B cell (primary cell): ENCODE measurements at regions of chr13 and their contacts with region 1.

Region 1: GRCh38 chr13:40401911-40402776 is 264.3 kb downstream of the FOXO1 start:
- DNase-seq: peak; percentile 56
- ATAC-seq: peak; percentile 99
- H3K4me3 ChIP-seq: peak overlapping the region in 3 of 5 experiments; percentile 16 to 33 (median 32)
- H3K4me3 Mint-ChIP-seq: peak overlapping the region; percentile 75
- H3K27ac ChIP-seq: no peak overlapping the region
- H3K27ac Mint-ChIP-seq: peak overlapping the region; percentile 75
- H3K4me1 ChIP-seq: peaks cover 15 to 18% of the 10 kb centered on the region in 2 donors
- H3K4me1 Mint-ChIP-seq: peaks cover 29% of the 10 kb centered on the region
- H3K27me3 ChIP-seq: no peaks in the 10 kb centered on the region
- H3K27me3 Mint-ChIP-seq: no peaks in the 10 kb centered on the region
- CTCF ChIP-seq: no peak

Region 2: GRCh38 chr13:40388617-40389016 is 13.5 kb before region 1 on chr13:
- CTCF ChIA-PET with region 1: interaction called, 4 read pairs
- POLR2A ChIA-PET with region 1: interaction called, 7 read pairs
- intact Hi-C with region 1: loop called (anchors 1 kb)
- DNase-seq: peak; percentile 80
- ATAC-seq: peak; percentile 94
- H3K4me3 ChIP-seq: peak overlapping the region in 4 of 5 experiments; percentile 9 to 66 (median 48)
- H3K4me3 Mint-ChIP-seq: peak overlapping the region; percentile 90
- H3K27ac ChIP-seq: peak overlapping the region; percentile 75 to 95
- H3K27ac Mint-ChIP-seq: peak overlapping the region; percentile 98
- H3K4me1 ChIP-seq: peaks cover 25 to 31% of the 10 kb centered on the region in 2 donors
- H3K4me1 Mint-ChIP-seq: peaks cover 26% of the 10 kb centered on the region
- H3K27me3 ChIP-seq: no peaks in the 10 kb centered on the region
- H3K27me3 Mint-ChIP-seq: no peaks in the 10 kb centered on the region
- CTCF ChIP-seq: no peak

Region 3: DNA sequence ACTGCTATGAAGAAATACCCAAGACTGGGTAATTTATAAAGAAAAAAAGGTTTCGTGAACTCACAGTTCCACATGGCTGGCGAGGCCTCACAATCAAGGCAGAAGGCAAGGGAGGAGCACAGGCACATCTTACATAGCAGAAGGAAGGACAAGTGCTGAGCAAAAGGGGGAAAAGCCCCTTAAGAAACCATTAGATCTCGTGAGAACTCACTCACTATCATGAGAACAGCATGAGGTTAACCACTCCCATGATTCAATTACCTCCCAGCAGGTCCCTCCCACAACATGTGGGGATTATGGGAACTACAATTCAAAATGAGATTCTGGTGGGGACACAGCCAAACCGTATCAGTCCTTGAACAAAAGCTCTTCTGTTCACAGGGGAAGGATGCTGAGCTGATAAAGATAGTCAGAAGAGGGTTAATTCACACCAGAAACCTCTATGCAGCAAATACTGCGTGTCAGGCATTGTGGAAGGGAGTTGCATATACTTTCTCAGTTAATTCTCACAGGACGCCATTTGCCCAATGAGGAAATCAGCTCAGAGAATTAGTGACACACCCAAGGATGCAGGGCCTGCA is 18.1 kb after region 1 on chr13:
- CTCF ChIA-PET with region 1: no interaction called
- POLR2A ChIA-PET with region 1: no interaction called
- intact Hi-C with region 1: loop called (anchors 2 kb)
- DNase-seq: no peak
- ATAC-seq: no peak
- H3K4me3 ChIP-seq: no peak overlapping the region
- H3K4me3 Mint-ChIP-seq: no peak overlapping the region
- H3K27ac ChIP-seq: no peak overlapping the region
- H3K27ac Mint-ChIP-seq: no peak overlapping the region
- H3K4me1 ChIP-seq: peaks cover 9 to 21% of the 10 kb centered on the region in 2 donors
- H3K4me1 Mint-ChIP-seq: peaks cover 35% of the 10 kb centered on the region
- H3K27me3 ChIP-seq: no peaks in the 10 kb centered on the region
- H3K27me3 Mint-ChIP-seq: no peaks in the 10 kb centered on the region
- CTCF ChIP-seq: no peak

Region 4: DNA sequence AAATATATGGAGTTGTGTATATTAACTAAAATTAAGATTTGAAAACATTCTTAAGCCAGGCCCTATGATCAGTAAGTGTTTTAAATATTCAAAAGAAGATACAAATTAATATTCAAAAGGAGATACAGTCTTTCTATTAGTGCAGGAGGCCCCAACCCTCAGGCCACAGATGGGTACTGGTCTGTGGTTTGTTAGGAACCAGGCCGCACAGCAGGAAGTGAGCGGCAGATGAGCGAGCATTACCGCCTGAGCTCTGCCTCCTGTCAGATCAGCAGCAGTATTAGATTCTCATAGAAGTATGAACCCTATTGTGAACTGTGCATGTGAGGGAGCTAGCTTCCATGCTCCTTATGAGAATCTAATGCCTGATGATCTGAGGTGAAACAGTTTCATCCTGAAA is 31.4 kb after region 1 on chr13:
- CTCF ChIA-PET with region 1: interaction called, 3 read pairs
- POLR2A ChIA-PET with region 1: no interaction called
- intact Hi-C with region 1: loop called (anchors 1 kb)
- DNase-seq: peak; percentile 71
- ATAC-seq: peak; percentile 64
- H3K4me3 ChIP-seq: no peak overlapping the region
- H3K4me3 Mint-ChIP-seq: peak overlapping the region; percentile 53
- H3K27ac ChIP-seq: peak overlapping the region; percentile 71 to 81
- H3K27ac Mint-ChIP-seq: peak overlapping the region; percentile 85
- H3K4me1 ChIP-seq: peaks cover 88 to 90% of the 10 kb centered on the region in 2 donors
- H3K4me1 Mint-ChIP-seq: peaks cover 86% of the 10 kb centered on the region
- H3K27me3 ChIP-seq: no peaks in the 10 kb centered on the region
- H3K27me3 Mint-ChIP-seq: no peaks in the 10 kb centered on the region
- CTCF ChIP-seq: no peak